Colonic mucosa (tissue), 4 donors: ENCODE measurements at regions of chrX and their contacts with region 1.

Region 1: GRCh38 chrX:18931972-18932371 is 51.9 kb downstream of the PHKA2 start:
- DNase-seq: peak; percentile 20
- H3K4me3 ChIP-seq: no peak overlapping the region
- H3K27ac ChIP-seq: no peak overlapping the region
- H3K4me1 ChIP-seq: no peaks in the 10 kb centered on the region
- H3K27me3 ChIP-seq: no peaks in the 10 kb centered on the region
- CTCF ChIP-seq: no peak

Region 2: DNA sequence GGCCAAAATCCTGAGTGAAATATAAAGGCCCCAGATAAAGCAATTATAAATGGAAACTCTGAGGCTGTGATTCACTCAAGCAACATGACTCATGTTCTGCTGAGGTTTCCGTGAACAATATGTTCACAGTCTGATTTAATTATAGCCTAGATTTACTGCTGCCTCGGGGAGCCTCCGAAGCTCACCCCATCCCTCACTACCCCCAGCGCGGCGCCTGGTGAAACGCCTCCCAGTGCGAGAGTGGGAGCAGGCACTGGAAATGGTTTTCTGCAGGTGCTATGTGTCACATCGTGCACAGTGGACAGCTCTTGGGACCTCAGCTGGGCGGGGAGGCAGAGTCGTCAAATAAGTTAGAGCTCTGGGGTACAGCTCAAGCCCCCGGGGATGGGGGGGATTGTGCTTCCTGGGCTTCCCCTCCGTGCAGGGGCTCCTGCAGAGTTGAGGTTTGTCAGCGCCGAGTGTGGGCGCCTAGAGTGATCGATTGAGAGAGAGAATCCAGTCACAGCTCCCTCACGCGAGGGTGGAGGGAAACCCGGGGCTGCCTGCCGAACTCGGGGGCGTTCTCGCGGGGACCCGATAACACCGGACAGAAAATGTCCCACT is 58.7 kb before region 1 on chrX:
- intact Hi-C with region 1: no loop called
- DNase-seq: no peak
- H3K4me3 ChIP-seq: no peak overlapping the region
- H3K27ac ChIP-seq: no peak overlapping the region
- H3K4me1 ChIP-seq: no peaks in the 10 kb centered on the region
- H3K27me3 ChIP-seq: no peaks in the 10 kb centered on the region
- CTCF ChIP-seq: no peak

Region 3: DNA sequence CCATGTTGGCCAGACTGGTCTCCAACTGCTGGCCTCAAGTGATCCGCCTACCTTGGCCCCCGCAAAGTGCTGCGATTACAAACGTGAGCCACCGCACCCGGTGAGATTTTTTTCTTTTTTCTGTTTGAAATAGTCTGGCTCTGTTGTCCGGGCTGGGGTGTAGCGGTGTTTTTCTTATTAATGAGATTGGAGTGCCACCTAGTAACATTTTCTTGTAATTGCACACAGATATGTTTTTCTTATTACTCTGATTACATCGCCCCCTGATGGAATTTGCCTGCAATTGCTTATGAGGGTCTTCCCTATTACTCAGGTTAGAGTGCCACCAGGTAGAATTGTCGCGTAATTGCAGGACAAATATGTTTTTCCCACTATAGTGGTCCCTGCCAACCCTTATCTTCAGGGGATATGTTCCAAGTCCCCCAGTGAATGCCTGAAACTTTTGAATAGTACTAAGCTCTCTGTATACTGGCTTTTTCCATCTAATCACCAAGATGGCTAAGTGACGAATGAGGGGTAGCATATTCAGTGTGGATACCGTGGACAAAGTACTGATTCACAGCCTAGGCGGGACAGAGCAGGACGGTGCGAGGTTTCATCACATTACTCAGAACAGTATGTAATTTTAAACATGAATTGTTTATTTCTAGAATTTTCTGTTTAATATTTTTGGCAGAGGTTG is 403.1 kb after region 1 on chrX:
- intact Hi-C with region 1: loop called (anchors 5 kb)
- DNase-seq: no peak
- H3K4me3 ChIP-seq: no peak overlapping the region
- H3K27ac ChIP-seq: no peak overlapping the region
- H3K4me1 ChIP-seq: no peaks in the 10 kb centered on the region
- H3K27me3 ChIP-seq: no peaks in the 10 kb centered on the region
- CTCF ChIP-seq: peak; percentile 42